GM18951 (cell line): ENCODE measurements at regions of chr11 and their contacts with region 1.

Region 1: GRCh38 chr11:31487848-31488247 is 21.6 kb downstream of the IMMP1L start:
- POLR2A ChIP-seq: no peak

Region 2: GRCh38 chr11:31218847-31219246 is 269.0 kb before region 1 on chr11:
- in situ Hi-C with region 1: no loop called
- POLR2A ChIP-seq: no peak

Region 3: DNA sequence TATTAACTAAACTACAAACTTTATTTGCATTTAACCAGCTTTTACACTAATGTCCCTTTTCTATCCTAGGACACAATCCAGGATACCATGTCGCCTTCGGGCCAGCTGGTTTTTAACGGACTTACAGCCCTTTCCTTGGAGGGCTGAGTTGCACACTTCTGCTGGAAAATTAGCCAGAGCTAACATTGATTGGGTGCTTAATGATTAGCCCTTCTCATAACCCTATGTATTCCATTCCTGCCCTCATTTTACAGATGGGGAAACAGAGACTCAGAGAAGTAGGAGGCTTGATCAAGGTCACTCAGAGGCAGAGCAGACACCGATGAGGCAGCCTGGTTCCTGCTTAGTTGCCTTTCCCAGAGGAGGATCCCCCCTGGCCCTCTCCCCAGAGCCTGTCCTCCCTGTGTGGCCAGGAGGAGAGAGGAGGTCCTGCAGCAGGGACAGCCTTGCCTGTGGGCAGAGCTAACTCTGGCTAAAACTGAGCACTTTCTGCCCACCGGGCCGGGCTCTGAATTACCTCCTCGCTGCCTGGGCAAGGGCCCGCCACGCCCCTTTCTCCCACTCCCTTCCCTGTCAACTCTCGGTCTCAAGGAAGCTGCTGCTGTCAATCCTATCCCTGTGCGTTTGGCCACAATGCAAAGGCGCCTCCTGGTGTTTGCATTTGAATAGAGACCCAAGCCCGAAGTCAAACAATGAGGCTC is 382.9 kb after region 1 on chr11:
- in situ Hi-C with region 1: loop called (anchors 25 kb)
- POLR2A ChIP-seq: no peak

Region 4: GRCh38 chr11:31958076-31958735 is 470.4 kb after region 1 on chr11:
- in situ Hi-C with region 1: loop called (anchors 25 kb)
- POLR2A ChIP-seq: no peak